ENCODE measurements at regions of chr13 and their contacts with region 1.

Region 1: GRCh38 chr13:50529154-50529882 is 314.2 kb downstream of the DLEU7 start:
- DNase-seq: peak; percentile 41 to 73 (median 70)
- H3K4me3 ChIP-seq: peak overlapping the region in 51 of 59 donors; percentile 6 to 58 (median 33)
- H3K27ac ChIP-seq: peak overlapping the region; percentile 0 to 93 (median 76)
- H3K27me3 ChIP-seq: no peaks in the 10 kb centered on the region
- CTCF ChIP-seq: peak in 6 of 56 donors; percentile 9 to 34 (median 17)

Region 2: DNA sequence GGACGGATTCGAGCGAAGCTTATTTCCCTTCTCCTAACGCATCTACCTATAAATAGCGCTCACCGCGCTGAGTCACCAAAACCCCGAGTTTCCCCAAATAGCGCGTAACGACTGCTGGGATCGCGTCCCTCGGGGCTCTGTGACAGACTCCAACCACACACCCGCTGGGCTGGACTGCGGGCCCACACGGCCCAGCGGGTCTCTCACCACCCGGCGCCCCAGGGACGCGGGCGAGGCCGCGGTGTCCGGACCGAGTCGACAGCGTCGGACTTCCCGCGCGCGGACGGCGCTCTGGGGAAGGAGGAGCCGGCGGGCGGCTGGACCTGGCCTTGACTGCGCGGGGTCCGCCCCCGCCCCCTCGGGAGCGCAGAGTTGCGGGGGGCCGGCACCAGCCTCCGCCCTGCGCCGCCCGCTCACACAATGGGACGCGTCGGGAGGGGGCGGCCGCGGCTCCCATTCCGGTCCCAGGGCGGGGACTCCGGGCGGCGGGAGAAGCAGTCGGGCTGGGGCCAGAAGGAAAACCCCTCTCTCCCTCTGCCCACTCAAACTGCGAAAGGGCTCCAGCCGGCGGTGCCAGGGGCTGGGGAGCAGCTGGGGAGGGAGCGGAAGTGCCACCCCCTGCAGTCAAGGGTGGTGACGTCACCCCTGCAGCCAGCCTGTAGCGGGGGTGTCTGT is 405.3 kb before region 1 on chr13:
- intact Hi-C with region 1: loop called in 1 of 2 experiments (anchors 5 kb)
- DNase-seq: peak in 9 of 10 donors; percentile 56 to 94 (median 72)
- H3K4me3 ChIP-seq: peak overlapping the region; percentile 66 to 99 (median 96)
- H3K27ac ChIP-seq: peak overlapping the region; percentile 95 to 100 (median 100)
- H3K27me3 ChIP-seq: peaks cover 0 to 11% (median 0%) of the 10 kb centered on the region in 45 donors
- CTCF ChIP-seq: peak in 25 of 56 donors; percentile 0 to 49 (median 20)

Region 3: DNA sequence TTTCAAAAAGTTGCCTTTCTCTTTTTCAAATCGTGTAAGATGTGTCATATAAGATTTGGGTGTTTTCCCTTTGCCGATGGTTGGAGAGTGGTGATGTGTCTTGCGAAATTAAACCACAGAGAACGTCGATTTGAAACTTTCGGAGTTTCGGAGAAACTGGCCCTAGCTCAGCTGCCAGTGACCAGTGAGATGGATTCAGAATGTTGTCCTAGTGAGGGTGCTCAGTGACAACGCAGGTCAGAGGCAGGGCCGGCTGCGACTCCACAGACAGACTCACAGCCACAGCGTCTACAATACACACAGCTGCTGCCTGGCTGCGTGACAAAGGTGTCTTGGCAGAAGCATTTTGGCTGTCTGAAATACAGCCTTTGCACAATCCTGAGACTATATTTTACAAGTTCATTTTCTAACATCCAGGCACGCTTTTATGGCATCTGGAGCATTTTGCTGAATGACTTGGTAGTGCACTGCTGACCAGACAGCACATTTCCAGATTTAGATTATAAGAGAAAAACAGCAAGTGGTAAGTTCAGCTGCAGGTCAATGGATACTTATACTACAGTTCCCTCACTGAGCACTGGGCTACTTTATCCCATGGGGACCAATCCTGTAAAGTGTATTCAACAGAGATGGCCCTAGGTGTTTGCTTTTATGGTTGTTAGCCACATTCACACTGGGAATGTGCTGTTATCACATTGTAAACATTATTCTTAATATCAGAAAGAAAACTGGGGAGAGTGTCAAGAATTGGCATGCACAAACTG is 306.6 kb before region 1 on chr13:
- intact Hi-C with region 1: loop called in 1 of 2 experiments (anchors 10 kb)
- DNase-seq: peak in 6 of 10 donors; percentile 24 to 62 (median 34)
- H3K4me3 ChIP-seq: peak overlapping the region in 37 of 59 donors; percentile 0 to 57 (median 20)
- H3K27ac ChIP-seq: peak overlapping the region in 3 of 59 donors; percentile 12 to 54 (median 23)
- H3K27me3 ChIP-seq: no peaks in the 10 kb centered on the region
- CTCF ChIP-seq: peak in 2 of 56 donors; percentile 14 to 21

Region 4: DNA sequence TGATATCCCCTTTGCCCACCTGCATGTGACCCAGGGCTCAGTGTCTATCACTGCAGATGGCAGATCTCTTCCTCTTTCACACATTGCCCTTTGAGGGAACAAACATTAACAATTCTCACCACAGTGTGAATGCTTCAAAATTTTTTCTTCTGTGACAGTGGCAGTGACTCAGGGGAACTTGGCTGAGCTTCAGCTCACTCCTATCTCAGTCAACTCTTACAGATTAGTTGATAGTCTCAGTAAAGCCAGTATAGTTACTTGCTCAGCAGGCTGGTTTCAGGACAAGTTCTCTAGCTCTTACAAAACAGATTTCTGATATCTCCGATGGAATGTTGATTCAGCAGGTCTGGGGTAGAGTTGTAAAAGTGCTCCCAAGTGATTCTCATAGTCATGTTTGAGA is 147.3 kb after region 1 on chr13:
- intact Hi-C with region 1: loop called (anchors 5 to 10 kb)
- DNase-seq: no peak
- H3K4me3 ChIP-seq: no peak overlapping the region
- H3K27ac ChIP-seq: peak overlapping the region in 24 of 59 donors; percentile 50 to 92 (median 84)
- H3K27me3 ChIP-seq: no peaks in the 10 kb centered on the region
- CTCF ChIP-seq: no peak

Region 5: DNA sequence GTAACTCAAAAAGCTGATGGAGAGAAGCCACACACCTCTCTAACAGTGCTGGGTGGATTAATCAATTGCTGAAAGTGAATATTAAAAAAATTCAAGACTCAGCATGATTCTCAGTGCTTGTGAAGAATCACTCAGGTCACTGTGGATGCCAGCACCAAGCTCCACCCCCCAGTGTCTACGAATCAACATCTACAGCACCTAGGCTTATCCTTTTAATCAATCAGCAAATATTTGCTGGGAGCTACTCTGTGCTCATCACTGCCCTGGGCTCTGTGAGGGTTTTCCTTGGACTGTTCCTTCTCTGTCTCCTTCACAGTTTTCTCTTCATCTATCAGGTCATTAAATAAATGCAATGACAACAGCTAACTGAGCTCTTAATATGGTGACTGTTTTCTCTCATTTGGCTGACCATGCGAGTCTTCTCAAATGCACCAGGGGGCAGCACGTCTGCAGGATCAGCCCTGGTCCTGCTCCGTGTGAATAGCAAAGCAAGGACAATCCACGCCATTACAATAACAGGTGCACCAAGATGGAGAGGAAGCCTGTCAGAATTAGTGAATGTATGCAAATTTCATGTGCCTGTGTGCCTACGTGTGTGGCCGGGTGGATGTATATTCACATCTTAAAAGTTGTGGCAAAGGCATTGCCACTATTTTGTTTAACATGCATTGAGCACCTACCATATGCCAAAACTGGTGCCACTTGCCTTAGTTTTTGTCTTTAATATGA is 596.3 kb after region 1 on chr13:
- intact Hi-C with region 1: no loop called
- DNase-seq: peak in 7 of 10 donors; percentile 16 to 67 (median 53)
- H3K4me3 ChIP-seq: no peak overlapping the region
- H3K27ac ChIP-seq: no peak overlapping the region
- H3K27me3 ChIP-seq: no peaks in the 10 kb centered on the region
- CTCF ChIP-seq: peak; percentile 43 to 84 (median 74)